ENCODE measurements at regions of chr3 and their contacts with region 1.

Region 1: GRCh38 chr3:12440927-12441326 is 43.4 kb upstream of the TSEN2 start:
- DNase-seq: no peak
- ATAC-seq: no peak
- H3K4me3 ChIP-seq: no peak overlapping the region
- H3K4me3 Mint-ChIP-seq: no peak overlapping the region
- H3K27ac ChIP-seq: no peak overlapping the region
- H3K27ac Mint-ChIP-seq: no peak overlapping the region
- H3K4me1 ChIP-seq: no peaks in the 10 kb centered on the region
- H3K4me1 Mint-ChIP-seq: no peaks in the 10 kb centered on the region
- H3K27me3 ChIP-seq: no peaks in the 10 kb centered on the region
- H3K27me3 Mint-ChIP-seq: peaks cover 16% of the 10 kb centered on the region
- CTCF ChIP-seq: no peak

Region 2: DNA sequence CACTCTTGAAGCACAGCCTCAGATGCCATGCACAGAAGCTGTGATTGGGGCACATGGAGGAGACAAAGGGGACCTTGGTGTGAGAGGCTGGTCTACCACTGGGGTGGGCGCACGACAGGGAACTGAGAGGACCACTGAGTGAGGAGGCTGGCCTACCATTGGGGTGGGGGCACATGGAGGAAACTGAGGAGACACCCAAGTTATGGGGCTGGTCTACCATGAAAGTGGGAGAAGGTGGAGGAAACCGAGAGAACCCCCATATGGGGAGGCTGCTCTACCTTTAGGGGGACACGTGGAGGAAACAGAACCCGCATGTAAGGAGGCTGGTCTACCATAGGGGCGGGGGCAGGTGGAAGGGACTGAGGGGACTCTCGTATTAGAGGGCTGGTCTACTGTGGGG is 1261.4 kb after region 1 on chr3:
- CTCF ChIA-PET with region 1: no interaction called
- POLR2A ChIA-PET with region 1: no interaction called
- intact Hi-C with region 1: loop called in 1 of 2 experiments (anchors 5 kb)
- DNase-seq: no peak
- ATAC-seq: no peak
- H3K4me3 ChIP-seq: no peak overlapping the region
- H3K4me3 Mint-ChIP-seq: no peak overlapping the region
- H3K27ac ChIP-seq: no peak overlapping the region
- H3K27ac Mint-ChIP-seq: no peak overlapping the region
- H3K4me1 ChIP-seq: no peaks in the 10 kb centered on the region
- H3K4me1 Mint-ChIP-seq: no peaks in the 10 kb centered on the region
- H3K27me3 ChIP-seq: peaks cover 0 to 2% of the 10 kb centered on the region in 2 experiments
- H3K27me3 Mint-ChIP-seq: peaks cover 49% of the 10 kb centered on the region
- CTCF ChIP-seq: no peak